GM10248 (cell line): ENCODE measurements at regions of chr5 and their contacts with region 1.

Region 1: DNA sequence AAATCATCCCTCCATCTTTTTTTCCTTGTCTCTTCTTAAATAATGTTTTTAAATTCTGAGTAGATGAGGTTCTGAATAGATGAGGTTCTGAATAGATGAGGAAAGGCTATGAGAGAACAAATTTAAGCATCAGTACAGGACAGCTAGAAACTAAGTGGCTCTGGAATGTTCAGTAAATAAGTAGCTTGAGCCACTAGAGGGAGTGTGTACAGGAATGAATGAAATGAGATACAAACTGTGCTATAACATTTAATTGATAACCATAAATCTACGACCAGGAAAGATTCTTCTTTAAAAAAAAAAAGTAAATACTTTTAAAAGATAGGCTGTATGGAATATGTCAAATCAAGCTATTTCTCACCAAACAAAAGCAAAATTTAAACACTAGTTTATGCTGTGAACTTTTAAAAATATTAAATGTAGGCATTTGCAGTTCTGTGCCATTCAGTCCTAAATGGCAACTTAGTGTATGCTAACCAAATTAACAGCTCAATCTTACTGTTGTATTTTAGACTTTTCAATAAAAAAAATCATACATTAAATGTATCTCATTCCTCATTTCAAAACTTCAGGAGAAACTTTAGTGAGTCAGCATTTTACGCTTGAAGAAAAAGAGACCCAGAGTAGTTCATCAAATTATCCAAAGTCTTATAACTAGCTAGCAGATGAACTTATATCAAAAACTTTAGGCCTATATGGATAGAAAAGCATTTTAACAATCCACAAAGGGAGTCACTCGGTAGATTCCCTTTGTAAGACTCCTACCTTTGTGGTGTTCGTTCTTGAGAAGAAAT is 70.4 kb upstream of the SNX2 start:
- DNase-seq: no peak
- CTCF ChIP-seq: peak; percentile 63

Region 2: GRCh38 chr5:122492664-122493063 is 211.8 kb before region 1 on chr5:
- CTCF ChIA-PET with region 1: no interaction called
- POLR2A ChIA-PET with region 1: no interaction called
- DNase-seq: no peak
- CTCF ChIP-seq: peak; percentile 17

Region 3: GRCh38 chr5:122693963-122694362 is 10.5 kb before region 1 on chr5:
- CTCF ChIA-PET with region 1: interaction called, 20 read pairs
- POLR2A ChIA-PET with region 1: no interaction called
- DNase-seq: no peak
- CTCF ChIP-seq: no peak

Region 4: DNA sequence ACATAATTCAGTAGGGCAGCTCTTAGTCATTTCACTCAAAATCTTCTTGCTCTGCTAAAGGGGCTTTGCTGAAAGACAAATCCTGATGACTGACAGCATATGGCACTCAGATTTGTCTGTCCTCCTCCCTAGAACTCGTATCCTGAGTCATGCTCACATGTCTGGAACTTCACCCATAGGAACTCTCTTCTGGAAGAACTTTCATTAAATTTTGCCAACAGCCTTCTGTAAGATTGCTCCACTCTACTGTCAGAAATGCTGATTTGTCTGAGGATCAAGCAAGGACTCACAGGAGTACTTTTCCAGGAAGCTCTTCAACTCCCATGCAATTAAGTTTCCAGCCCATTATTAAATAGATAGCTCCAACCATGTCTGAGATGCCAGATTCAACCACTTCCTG is 10.7 kb after region 1 on chr5:
- CTCF ChIA-PET with region 1: interaction called, 25 read pairs
- POLR2A ChIA-PET with region 1: no interaction called
- DNase-seq: no peak
- CTCF ChIP-seq: no peak

Region 5: DNA sequence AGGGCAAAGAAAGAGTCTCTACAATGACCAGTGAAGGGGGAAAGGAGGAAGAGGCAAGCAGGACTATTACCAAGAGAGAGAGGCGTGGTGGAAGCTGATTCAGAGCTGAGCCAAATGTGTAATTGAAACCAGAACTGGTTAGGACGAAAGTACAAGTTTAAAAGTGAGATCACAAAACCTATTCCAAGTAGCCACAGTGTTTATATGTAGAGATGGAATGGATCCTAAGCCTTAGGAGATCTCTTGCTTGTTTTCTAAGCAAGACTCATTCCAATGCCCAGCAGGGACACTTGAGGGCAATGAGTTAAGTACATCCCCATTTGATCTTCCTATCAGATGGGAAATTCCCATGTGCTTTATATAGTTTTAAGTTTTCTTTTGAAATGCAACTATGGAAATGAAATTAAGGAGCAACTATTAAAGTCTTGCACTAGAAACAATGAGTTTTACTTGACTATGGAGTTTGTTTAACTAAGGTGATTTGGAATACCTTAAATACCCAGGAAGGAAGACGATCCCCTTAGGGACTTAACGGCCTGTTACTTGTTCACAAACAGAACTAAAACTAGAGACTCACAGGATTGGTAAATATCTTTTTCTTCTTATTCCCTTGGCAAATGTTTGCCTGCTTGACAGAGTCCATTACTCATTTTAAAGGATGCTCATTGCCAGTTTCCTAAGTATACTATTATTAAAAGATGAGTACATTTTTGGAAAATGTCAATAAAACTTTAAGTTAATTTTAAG is 19.3 kb after region 1 on chr5:
- CTCF ChIA-PET with region 1: interaction called, 12 read pairs
- POLR2A ChIA-PET with region 1: no interaction called
- DNase-seq: peak; percentile 56
- CTCF ChIP-seq: no peak

Region 6: GRCh38 chr5:122761115-122761514 is 56.7 kb after region 1 on chr5:
- CTCF ChIA-PET with region 1: interaction called, 10 read pairs
- POLR2A ChIA-PET with region 1: no interaction called
- DNase-seq: no peak
- CTCF ChIP-seq: no peak

Region 7: GRCh38 chr5:122845229-122846050 is 141.0 kb after region 1 on chr5 and contains the start of gene SNX24:
- CTCF ChIA-PET with region 1: interaction called, 10 read pairs
- POLR2A ChIA-PET with region 1: no interaction called
- DNase-seq: peak; percentile 85
- CTCF ChIP-seq: no peak

Region 8: DNA sequence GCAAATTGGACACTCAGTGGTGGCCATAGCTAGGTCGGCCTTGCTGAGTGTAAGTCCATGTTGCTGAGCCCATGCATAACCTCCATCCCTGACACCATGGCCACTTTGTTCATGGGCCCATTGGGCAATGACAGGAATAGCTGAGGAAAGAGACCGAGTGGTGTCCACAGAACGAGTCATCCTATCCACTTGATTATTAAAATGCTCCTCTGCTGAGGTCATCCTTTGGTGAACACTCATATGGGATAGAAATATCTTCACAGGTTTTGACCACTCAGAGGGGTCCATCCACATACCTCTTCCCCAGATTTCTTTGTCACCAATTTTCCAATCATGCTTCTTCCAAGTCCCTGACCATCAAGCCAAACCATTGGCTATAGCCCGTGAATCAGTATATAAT is 268.4 kb after region 1 on chr5:
- CTCF ChIA-PET with region 1: no interaction called
- POLR2A ChIA-PET with region 1: no interaction called
- DNase-seq: no peak
- CTCF ChIP-seq: no peak